ENCODE measurements at regions of chr6 and their contacts with region 1.

Region 1: DNA sequence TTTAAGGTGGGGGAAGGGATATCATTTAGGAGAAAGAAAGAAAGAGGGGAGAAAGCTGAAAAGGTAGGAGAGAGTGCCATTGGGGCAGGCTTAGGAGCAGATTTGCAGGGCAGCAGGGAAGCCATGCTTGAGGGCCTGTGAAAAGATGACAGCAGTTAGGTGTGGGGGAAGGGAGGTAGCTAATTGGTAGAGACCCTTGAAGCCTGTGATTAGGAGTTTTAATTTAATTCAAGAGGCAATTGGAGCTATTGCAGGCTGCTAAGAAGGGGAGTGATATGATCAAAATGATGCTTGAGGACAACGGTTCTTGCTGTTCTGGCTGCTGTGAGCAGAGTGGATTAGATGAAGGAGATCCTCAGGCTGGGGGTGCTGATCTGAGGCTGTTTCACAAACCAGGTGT is 24.5 kb upstream of the SEC63 start:
- DNase-seq: no peak
- ATAC-seq: no peak
- H3K4me3 ChIP-seq: no peak overlapping the region
- H3K27ac ChIP-seq: no peak overlapping the region
- H3K4me1 ChIP-seq: no peaks in the 10 kb centered on the region
- H3K27me3 ChIP-seq: peaks cover 0 to 7% (median 0%) of the 10 kb centered on the region in 3 donors
- CTCF ChIP-seq: no peak
- POLR2A ChIP-seq: no peak

Region 2: GRCh38 chr6:107941627-107942026 is 40.9 kb before region 1 on chr6:
- in situ Hi-C with region 1: no loop called
- intact Hi-C with region 1: no loop called
- DNase-seq: no peak
- ATAC-seq: no peak
- H3K4me3 ChIP-seq: no peak overlapping the region
- H3K27ac ChIP-seq: no peak overlapping the region
- H3K4me1 ChIP-seq: peaks cover 13 to 25% of the 10 kb centered on the region in 2 donors
- H3K27me3 ChIP-seq: no peaks in the 10 kb centered on the region
- CTCF ChIP-seq: no peak
- POLR2A ChIP-seq: no peak

Region 3: DNA sequence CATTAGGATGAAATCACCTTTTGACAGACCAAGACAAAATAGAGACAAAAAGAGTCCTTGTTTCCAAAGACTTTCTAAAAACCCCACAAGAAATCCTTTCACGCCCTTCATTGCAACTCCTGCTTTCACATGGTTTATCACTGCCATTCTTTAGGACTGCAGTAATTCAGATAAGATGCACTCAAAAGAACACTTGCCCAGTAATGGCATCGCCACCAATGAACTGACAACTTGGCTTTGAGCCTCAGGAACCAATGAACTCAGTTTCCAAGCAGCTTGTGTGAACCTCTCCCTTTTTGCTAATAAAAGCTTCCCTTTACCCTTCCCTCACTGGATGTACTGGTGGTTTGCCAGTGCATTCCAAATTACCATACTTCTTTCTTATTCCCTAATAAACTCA is 70.2 kb after region 1 on chr6:
- in situ Hi-C with region 1: no loop called
- intact Hi-C with region 1: loop called (anchors 5 kb)
- DNase-seq: no peak
- ATAC-seq: no peak
- H3K4me3 ChIP-seq: no peak overlapping the region
- H3K27ac ChIP-seq: no peak overlapping the region
- H3K4me1 ChIP-seq: no peaks in the 10 kb centered on the region
- H3K27me3 ChIP-seq: no peaks in the 10 kb centered on the region
- CTCF ChIP-seq: no peak
- POLR2A ChIP-seq: no peak